Lower leg skin (tissue), 4 donors: ENCODE measurements at regions of chr2 and their contacts with region 1.

Region 1: DNA sequence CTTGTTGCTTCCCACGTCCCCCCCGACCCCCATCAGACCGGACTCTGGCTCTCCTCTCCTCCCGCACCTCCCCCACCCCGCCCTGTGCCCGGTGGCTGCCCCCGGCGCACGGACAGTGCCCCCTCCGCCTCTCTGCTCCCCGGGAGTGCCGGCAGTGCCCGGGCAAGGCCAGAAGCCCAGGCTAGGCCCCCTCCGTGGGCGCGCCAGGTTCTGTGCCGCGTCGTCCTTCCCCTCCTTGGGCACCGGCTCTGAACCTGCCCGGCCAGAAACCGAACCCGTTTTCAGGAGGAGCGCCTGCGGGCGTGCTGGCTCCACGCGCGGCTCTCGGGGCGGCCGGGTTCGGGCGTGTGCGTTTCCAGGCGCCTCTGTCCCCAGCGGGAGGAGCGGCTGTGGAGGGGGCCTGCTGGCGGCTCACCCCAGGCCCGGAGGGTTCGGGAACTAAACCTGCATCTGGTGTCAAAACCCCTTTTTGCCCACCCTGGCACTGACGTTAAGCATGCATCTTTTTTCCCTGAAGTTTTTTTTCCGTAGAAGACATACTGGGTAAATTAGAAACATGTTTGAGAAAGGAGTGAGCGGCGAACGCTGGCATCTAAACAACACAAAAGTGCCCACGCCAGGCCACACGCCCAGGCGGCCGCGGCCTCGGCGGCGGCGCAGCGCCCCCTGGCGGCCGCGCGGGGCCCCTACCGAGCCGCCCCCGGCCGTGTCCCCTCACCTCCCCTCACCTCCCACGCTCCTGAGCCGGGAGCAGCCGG is 123.9 kb upstream of the SLC1A4 start:
- DNase-seq: peak; percentile 63 to 93
- H3K4me3 ChIP-seq: peak overlapping the region; percentile 38
- CTCF ChIP-seq: no peak
- POLR2A ChIP-seq: no peak

Region 2: GRCh38 chr2:64052468-64053241 is 812.6 kb before region 1 on chr2:
- intact Hi-C with region 1: no loop called
- DNase-seq: no peak
- H3K4me3 ChIP-seq: no peak overlapping the region
- CTCF ChIP-seq: no peak
- POLR2A ChIP-seq: no peak

Region 3: DNA sequence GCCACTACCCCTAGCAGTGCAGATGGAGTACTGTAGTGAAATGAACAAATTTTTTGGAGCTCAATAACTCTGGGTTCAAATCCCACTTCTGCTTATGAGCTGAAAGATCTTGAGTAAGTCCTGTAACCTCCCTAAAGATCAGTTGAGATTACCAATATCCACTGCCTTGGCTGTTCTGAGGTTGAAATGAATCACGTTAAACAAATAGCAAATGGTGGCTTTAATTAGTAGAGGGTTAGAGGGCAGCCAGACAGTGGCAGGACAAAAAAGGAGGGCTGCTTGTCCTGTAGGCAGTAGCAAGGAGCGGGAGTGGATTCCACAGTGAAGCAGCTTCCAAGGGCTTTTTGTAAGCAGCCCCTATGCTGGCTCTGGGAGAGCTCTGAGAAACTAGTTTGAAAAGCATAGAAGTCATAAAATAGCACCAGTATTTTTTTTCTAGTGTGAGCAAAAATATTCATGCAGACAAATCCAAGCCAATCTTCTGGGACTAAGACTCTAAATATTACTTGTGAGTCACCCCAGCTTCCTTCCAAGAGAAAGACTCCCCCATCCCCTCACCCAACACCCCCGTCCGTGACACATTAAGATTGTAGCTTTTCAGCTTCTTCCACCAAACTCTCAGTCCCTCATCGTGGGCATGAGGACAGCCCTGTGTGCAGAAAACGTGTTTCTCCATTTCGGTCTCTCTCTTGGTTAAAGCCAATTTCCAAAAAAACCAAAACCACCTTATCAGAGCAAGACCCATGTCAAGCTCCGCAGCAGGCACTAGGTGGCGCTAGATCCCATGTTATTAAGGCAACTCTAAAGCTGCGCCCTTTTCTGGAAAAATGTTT is 534.8 kb before region 1 on chr2:
- intact Hi-C with region 1: loop called (anchors 10 kb)
- DNase-seq: peak; percentile 69 to 95
- H3K4me3 ChIP-seq: no peak overlapping the region
- CTCF ChIP-seq: peak in 1 of 3 donors; percentile 62
- POLR2A ChIP-seq: no peak

Region 4: DNA sequence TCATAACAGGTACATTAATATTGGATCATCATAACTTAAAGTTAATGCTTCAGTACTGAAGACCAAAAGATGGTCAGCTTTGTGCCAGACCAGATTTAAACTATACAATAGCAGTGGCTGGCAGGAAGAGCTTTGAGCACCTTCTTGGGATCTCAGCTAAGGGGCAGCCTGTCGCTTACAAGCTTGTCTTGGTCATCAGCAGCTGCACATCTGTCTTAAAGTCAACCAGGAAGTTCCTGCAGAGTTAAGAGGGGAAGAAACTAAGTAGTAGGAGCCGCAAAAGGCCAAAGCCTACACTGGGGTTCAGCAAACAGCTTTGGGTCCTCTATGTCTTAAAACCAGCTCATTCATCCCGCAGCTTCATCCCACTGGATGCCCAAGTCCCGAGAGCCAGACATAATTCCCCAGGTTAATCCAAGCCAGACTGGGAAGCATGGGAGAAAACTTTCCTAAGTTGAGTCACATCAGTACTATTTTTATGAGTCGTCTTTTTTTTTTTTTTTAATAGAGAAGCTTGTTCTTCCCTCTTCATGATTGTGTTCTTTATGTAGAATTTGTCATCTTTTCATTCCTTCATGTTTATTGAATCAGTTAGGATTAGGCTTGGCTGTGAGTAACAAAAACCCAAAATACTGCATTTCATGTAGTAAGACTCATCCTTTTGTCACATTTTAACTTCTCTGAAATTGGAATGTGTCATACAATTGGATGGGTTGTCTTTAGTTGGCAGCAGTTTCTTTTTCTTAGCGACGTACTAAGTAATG is 270.8 kb before region 1 on chr2:
- intact Hi-C with region 1: loop called (anchors 5 kb)
- DNase-seq: no peak
- H3K4me3 ChIP-seq: no peak overlapping the region
- CTCF ChIP-seq: no peak
- POLR2A ChIP-seq: no peak

Region 5: DNA sequence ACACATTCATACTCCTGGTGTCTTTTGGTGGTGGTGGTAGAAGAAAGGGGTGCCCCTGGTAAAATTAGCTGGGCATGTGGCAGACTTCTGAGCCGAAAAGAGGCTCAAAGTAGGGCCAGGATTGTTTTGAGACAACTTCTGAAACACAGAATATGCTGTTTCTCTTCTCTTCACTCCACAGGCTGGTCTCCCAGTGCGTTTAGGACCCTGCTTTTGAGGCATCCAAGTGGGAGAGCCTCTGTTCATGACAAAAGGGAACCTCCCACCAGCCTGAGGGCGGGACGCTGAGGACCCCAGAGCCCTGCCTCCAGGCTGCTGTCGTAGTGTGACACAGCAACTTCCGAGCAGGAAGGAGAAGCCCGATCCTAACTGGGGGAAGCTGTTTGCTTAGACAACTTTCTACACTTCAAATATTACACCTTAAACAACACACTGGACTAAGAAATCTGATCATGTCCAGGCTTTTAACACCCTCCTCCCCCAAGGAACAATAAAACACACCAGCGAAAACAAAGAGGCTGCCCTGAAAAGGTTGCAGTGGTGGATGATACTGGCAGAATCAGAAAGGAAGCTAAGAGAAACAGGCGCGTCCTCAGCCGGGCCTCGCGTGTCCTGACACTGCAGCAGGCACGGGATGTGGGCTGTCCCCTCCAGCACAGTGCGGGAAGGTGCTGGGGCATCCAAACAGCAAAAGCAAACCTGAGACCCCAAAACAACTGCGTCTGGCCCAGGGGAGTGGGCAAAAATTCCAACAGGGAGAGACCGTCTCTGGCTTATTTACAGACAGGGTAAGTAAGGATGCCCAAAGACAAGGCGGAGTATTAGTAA is 220.9 kb before region 1 on chr2:
- intact Hi-C with region 1: loop called (anchors 5 kb)
- DNase-seq: peak; percentile 83 to 96
- H3K4me3 ChIP-seq: peak overlapping the region; percentile 16
- CTCF ChIP-seq: no peak
- POLR2A ChIP-seq: peak in 1 of 2 donors; percentile 62